GM12878 (cell line): ENCODE measurements at regions of chr2 and their contacts with region 1.

Region 1: GRCh38 chr2:68282811-68283418 is 30.6 kb upstream of the PPP3R1 start:
- DNase-seq: no peak
- ATAC-seq: peak; percentile 84
- H3K4me3 ChIP-seq: no peak overlapping the region
- H3K27ac ChIP-seq: no peak overlapping the region
- H3K4me1 ChIP-seq: no peaks in the 10 kb centered on the region
- H3K27me3 ChIP-seq: no peaks in the 10 kb centered on the region
- CTCF ChIP-seq: peak; percentile 69 to 77 (median 70); a peak in 5 of 6 replicates
- EP300 ChIP-seq: no peak
- POLR2A ChIP-seq: no peak
- RAD21 ChIP-seq: peak; percentile 84

Region 2: GRCh38 chr2:68031542-68032160 is 251.3 kb before region 1 on chr2:
- CTCF ChIA-PET with region 1: no interaction called
- POLR2A ChIA-PET with region 1: no interaction called
- RAD21 ChIA-PET with region 1: no interaction called
- SMC1A ChIA-PET with region 1: no interaction called
- in situ Hi-C with region 1: no loop called
- intact Hi-C with region 1: no loop called
- DNase-seq: peak; percentile 12
- ATAC-seq: peak; percentile 83
- H3K4me3 ChIP-seq: no peak overlapping the region
- H3K27ac ChIP-seq: no peak overlapping the region
- H3K4me1 ChIP-seq: no peaks in the 10 kb centered on the region
- H3K27me3 ChIP-seq: no peaks in the 10 kb centered on the region
- CTCF ChIP-seq: peak; percentile 50 to 74 (median 65); a peak in 5 of 6 replicates
- EP300 ChIP-seq: no peak
- POLR2A ChIP-seq: no peak
- RAD21 ChIP-seq: peak; percentile 89

Region 3: DNA sequence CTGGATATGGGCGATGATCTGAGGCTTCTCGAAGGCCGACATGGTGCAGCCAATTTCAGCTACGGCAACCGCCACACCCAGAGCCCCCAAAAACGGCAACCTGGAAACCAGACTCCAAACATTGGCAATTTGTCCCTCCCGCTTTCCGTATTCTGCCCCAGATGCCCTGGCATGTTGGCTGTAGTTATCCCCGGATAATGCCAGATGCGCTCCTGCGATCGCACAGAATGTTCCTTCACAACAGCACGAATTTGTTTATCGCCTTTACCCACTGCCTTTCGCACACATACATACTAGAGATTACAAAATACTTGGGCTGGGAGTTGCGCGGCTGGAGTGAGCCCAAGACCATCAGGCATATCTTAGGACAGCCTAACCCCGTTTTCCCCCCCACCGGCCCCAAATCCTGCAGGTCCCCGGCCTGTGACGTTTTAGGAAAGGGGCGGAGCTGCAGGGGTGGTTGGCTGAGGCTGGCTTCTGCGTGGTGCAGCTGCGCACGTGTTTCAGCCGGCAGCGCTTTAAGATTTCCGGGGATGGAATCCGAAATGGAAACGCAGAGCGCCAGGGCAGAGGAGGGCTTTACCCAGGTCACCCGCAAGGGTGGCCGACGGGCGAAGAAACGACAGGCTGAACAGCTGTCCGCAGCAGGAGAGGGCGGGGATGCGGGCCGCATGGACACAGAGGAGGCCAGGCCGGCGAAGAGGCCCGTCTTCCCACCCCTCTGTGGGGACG is 125.3 kb before region 1 on chr2 and contains the start of gene PNO1:
- CTCF ChIA-PET with region 1: no interaction called
- POLR2A ChIA-PET with region 1: no interaction called
- RAD21 ChIA-PET with region 1: no interaction called
- SMC1A ChIA-PET with region 1: interaction called, 12 read pairs
- in situ Hi-C with region 1: no loop called
- intact Hi-C with region 1: no loop called
- DNase-seq: peak; percentile 86
- ATAC-seq: peak; percentile 96
- H3K4me3 ChIP-seq: peak within 1 kb of the TSS; percentile 98
- H3K27ac ChIP-seq: peak within 1 kb of the TSS; percentile 97
- H3K4me1 ChIP-seq: peaks cover 10% of the 10 kb centered on the region
- H3K27me3 ChIP-seq: no peaks in the 10 kb centered on the region
- CTCF ChIP-seq: no peak
- EP300 ChIP-seq: no peak; a peak in 1 of 4 replicates
- POLR2A ChIP-seq: peak; percentile 81
- RAD21 ChIP-seq: no peak
- polyA plus RNA-seq, gene PNO1: 9.7 to 18.5 TPM

Region 4: DNA sequence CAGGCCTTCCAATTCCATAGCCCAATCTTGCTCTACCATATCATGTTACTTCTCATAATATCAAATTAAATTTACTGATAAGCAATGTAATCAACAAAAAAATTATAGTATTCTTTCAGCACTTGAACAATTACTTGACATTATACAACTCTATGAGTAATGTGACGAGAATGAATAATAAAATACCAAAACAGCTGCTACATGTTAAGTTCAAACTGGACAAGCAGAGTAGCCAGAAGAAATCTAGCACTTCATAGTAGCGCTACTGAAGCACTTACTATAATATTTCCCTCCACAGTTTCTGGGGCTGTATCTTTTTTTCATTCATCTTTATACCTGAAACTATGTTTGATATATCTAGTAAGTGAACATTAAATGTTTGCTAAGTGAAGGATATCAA is 45.5 kb before region 1 on chr2:
- CTCF ChIA-PET with region 1: interaction called, 11 read pairs
- POLR2A ChIA-PET with region 1: no interaction called
- RAD21 ChIA-PET with region 1: no interaction called
- SMC1A ChIA-PET with region 1: no interaction called
- in situ Hi-C with region 1: no loop called
- intact Hi-C with region 1: no loop called
- DNase-seq: no peak
- ATAC-seq: no peak
- H3K4me3 ChIP-seq: no peak overlapping the region
- H3K27ac ChIP-seq: no peak overlapping the region
- H3K4me1 ChIP-seq: peaks cover 3% of the 10 kb centered on the region
- H3K27me3 ChIP-seq: no peaks in the 10 kb centered on the region
- CTCF ChIP-seq: no peak
- EP300 ChIP-seq: no peak
- POLR2A ChIP-seq: no peak
- RAD21 ChIP-seq: no peak

Region 5: DNA sequence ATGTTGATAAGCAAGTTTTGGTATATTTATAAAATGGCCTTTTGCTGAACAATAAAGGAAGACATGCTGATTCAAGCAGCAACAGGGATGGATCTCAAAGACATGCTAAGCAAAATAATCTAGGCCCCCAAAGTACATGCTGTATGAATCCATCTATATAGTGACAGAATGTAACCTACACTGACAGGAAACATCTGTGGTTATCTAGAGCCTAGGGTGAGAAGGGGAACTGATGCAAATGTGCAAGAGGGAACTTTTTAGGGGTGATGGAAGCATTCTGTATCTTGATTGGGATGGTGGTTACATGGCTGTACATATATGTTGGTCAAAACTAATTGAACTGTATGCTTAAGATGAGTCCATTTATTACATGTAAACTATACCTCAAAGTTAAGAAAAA is 12.6 kb after region 1 on chr2:
- CTCF ChIA-PET with region 1: interaction called, 35 read pairs
- POLR2A ChIA-PET with region 1: no interaction called
- RAD21 ChIA-PET with region 1: interaction called, 6 read pairs
- SMC1A ChIA-PET with region 1: interaction called, 8 read pairs
- in situ Hi-C with region 1: no loop called
- intact Hi-C with region 1: no loop called
- DNase-seq: no peak
- ATAC-seq: peak; percentile 79
- H3K4me3 ChIP-seq: no peak overlapping the region
- H3K27ac ChIP-seq: no peak overlapping the region
- H3K4me1 ChIP-seq: peaks cover 6% of the 10 kb centered on the region
- H3K27me3 ChIP-seq: no peaks in the 10 kb centered on the region
- CTCF ChIP-seq: no peak
- EP300 ChIP-seq: no peak
- POLR2A ChIP-seq: no peak
- RAD21 ChIP-seq: no peak